Panc1 (cell line): ENCODE measurements at regions of chrX and their contacts with region 1.

Region 1: GRCh38 chrX:104922206-104922621 is 298.3 kb downstream of the TEX13A start:
- DNase-seq: peak; percentile 74
- ATAC-seq: peak; percentile 93
- H3K4me3 ChIP-seq: no peak overlapping the region
- H3K27ac ChIP-seq: no peak overlapping the region
- H3K4me1 ChIP-seq: no peaks in the 10 kb centered on the region
- H3K27me3 ChIP-seq: no peaks in the 10 kb centered on the region
- CTCF ChIP-seq: peak; percentile 96

Region 2: GRCh38 chrX:104565791-104566680 is 356.2 kb before region 1 on chrX and contains the start of gene IL1RAPL2:
- CTCF ChIA-PET with region 1: interaction called, 6 read pairs
- POLR2A ChIA-PET with region 1: no interaction called
- in situ Hi-C with region 1: no loop called
- intact Hi-C with region 1: loop called (anchors 5 kb)
- DNase-seq: no peak
- ATAC-seq: peak; percentile 86
- H3K4me3 ChIP-seq: peak within 1 kb of the TSS; percentile 16 to 46
- H3K27ac ChIP-seq: no peak within 1 kb of the TSS
- H3K4me1 ChIP-seq: peaks cover 9% of the 10 kb centered on the region
- H3K27me3 ChIP-seq: peaks cover 9% of the 10 kb centered on the region; the same call in 1 of the 2 replicates
- CTCF ChIP-seq: peak; percentile 90
- total RNA-seq, gene IL1RAPL2: not detected

Region 3: DNA sequence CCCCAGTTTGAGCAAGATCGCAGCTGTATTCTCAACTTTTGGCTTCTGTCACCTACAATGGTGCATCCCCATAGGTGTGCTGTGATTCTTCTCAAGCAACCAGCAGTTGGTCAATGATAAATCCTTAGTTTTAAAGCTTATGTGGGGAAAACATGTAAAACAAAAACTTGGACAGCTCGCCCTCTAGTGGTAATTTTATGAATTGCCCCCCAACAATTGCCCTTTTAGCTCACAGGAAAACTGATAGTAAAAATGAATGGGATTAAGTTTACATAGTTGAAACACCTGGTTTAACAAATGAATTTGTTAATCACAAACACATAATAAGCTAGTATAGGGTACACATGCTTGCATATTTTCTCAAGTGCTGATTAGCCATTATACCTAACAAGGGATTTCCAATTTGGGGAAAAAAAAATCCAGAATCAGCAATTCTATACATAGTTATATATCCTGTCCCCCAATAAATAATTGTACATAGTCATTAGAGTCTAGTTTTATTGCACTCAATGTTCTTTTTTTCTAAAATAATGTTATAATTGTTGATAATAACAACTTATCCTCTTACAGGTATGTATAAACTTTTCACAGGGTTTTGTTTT is 268.1 kb after region 1 on chrX:
- CTCF ChIA-PET with region 1: interaction called, 6 read pairs
- POLR2A ChIA-PET with region 1: no interaction called
- in situ Hi-C with region 1: no loop called
- intact Hi-C with region 1: loop called (anchors 10 kb)
- DNase-seq: peak; percentile 36
- ATAC-seq: peak; percentile 73
- H3K4me3 ChIP-seq: no peak overlapping the region
- H3K27ac ChIP-seq: no peak overlapping the region
- H3K4me1 ChIP-seq: no peaks in the 10 kb centered on the region
- H3K27me3 ChIP-seq: no peaks in the 10 kb centered on the region
- CTCF ChIP-seq: peak; percentile 78